Natural killer cell (primary cell): ENCODE measurements at regions of chr12 and their contacts with region 1.

Region 1: GRCh38 chr12:6873094-6874014 is at the start of gene SPSB2:
- DNase-seq: peak; percentile 99 to 100
- ATAC-seq: peak; percentile 87 to 99 (median 91)
- H3K4me3 ChIP-seq: peak within 1 kb of the TSS; percentile 81
- H3K4me3 Mint-ChIP-seq: peak within 1 kb of the TSS; percentile 93
- H3K27ac ChIP-seq: peak within 1 kb of the TSS; percentile 63
- H3K27ac Mint-ChIP-seq: peak within 1 kb of the TSS; percentile 87 to 94
- H3K4me1 ChIP-seq: peaks cover 50% of the 10 kb centered on the region
- H3K4me1 Mint-ChIP-seq: peaks cover 41 to 56% of the 10 kb centered on the region in 2 donors
- H3K27me3 ChIP-seq: no peaks in the 10 kb centered on the region
- H3K27me3 Mint-ChIP-seq: no peaks in the 10 kb centered on the region
- CTCF ChIP-seq: no peak
- total RNA-seq, gene SPSB2: 8.1 to 19.1 (median 8.4) TPM

Region 2: GRCh38 chr12:6752921-6753771 is 120.2 kb before region 1 on chr12 and contains the start of gene MLF2:
- intact Hi-C with region 1: loop called (anchors 2 kb)
- DNase-seq: peak; percentile 97 to 98
- ATAC-seq: peak; percentile 87 to 94 (median 88)
- H3K4me3 ChIP-seq: peak within 1 kb of the TSS; percentile 78
- H3K4me3 Mint-ChIP-seq: peak within 1 kb of the TSS; percentile 95
- H3K27ac ChIP-seq: peak within 1 kb of the TSS; percentile 93
- H3K27ac Mint-ChIP-seq: peak within 1 kb of the TSS; percentile 95 to 97
- H3K4me1 ChIP-seq: peaks cover 16% of the 10 kb centered on the region
- H3K4me1 Mint-ChIP-seq: peaks cover 5 to 34% of the 10 kb centered on the region in 2 donors
- H3K27me3 ChIP-seq: no peaks in the 10 kb centered on the region
- H3K27me3 Mint-ChIP-seq: peaks cover 0 to 13% of the 10 kb centered on the region in 2 donors
- CTCF ChIP-seq: no peak
- total RNA-seq, gene MLF2: 114 to 117 (median 116) TPM

Region 3: GRCh38 chr12:6890789-6891645 is 17.7 kb after region 1 on chr12:
- intact Hi-C with region 1: loop called (anchors 1 kb)
- DNase-seq: peak; percentile 99
- ATAC-seq: peak; percentile 93 to 99 (median 94)
- H3K4me3 ChIP-seq: peak overlapping the region; percentile 70
- H3K4me3 Mint-ChIP-seq: peak overlapping the region; percentile 87
- H3K27ac ChIP-seq: peak overlapping the region; percentile 98
- H3K27ac Mint-ChIP-seq: peak overlapping the region; percentile 95 to 96
- H3K4me1 ChIP-seq: peaks cover 14% of the 10 kb centered on the region
- H3K4me1 Mint-ChIP-seq: peaks cover 11 to 15% of the 10 kb centered on the region in 2 donors
- H3K27me3 ChIP-seq: no peaks in the 10 kb centered on the region
- H3K27me3 Mint-ChIP-seq: no peaks in the 10 kb centered on the region
- CTCF ChIP-seq: peak; percentile 75

Region 4: DNA sequence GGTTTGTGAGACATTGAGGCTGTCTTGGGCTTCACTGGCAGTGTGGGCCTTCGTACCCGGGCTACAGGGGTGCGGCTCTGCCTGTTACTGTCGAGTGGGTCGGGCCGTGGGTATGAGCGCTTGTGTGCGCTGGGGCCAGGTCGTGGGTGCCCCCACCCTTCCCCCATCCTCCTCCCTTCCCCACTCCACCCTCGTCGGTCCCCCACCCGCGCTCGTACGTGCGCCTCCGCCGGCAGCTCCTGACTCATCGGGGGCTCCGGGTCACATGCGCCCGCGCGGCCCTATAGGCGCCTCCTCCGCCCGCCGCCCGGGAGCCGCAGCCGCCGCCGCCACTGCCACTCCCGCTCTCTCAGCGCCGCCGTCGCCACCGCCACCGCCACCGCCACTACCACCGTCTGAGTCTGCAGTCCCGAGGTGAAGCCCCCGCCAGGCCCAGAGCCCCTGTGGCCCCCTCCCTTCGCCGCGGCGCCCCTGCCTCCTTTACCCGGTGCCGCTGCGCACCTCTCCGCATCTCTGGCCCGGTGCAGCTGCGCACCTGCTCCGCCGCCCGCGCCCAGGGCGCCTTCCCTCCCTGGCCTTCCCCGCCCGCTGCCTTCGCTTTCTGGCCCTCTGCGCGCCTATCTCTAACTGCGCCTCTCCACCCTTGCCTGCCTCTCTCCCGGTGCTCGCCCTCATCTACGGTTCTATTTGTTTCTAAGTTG is 41.0 kb after region 1 on chr12 and contains the start of gene ENO2:
- intact Hi-C with region 1: loop called (anchors 2 kb)
- DNase-seq: peak; percentile 80 to 91
- ATAC-seq: peak; percentile 92 to 94 (median 93)
- H3K4me3 ChIP-seq: peak within 1 kb of the TSS; percentile 54
- H3K4me3 Mint-ChIP-seq: peak within 1 kb of the TSS; percentile 94
- H3K27ac ChIP-seq: peak within 1 kb of the TSS; percentile 82
- H3K27ac Mint-ChIP-seq: peak within 1 kb of the TSS; percentile 74 to 95
- H3K4me1 ChIP-seq: peaks cover 16% of the 10 kb centered on the region
- H3K4me1 Mint-ChIP-seq: peaks cover 16 to 41% of the 10 kb centered on the region in 2 donors
- H3K27me3 ChIP-seq: no peaks in the 10 kb centered on the region
- H3K27me3 Mint-ChIP-seq: peaks cover 0 to 6% of the 10 kb centered on the region in 2 donors
- CTCF ChIP-seq: no peak
- total RNA-seq, gene ENO2: 21.6 to 30.8 (median 23.1) TPM

Region 5: DNA sequence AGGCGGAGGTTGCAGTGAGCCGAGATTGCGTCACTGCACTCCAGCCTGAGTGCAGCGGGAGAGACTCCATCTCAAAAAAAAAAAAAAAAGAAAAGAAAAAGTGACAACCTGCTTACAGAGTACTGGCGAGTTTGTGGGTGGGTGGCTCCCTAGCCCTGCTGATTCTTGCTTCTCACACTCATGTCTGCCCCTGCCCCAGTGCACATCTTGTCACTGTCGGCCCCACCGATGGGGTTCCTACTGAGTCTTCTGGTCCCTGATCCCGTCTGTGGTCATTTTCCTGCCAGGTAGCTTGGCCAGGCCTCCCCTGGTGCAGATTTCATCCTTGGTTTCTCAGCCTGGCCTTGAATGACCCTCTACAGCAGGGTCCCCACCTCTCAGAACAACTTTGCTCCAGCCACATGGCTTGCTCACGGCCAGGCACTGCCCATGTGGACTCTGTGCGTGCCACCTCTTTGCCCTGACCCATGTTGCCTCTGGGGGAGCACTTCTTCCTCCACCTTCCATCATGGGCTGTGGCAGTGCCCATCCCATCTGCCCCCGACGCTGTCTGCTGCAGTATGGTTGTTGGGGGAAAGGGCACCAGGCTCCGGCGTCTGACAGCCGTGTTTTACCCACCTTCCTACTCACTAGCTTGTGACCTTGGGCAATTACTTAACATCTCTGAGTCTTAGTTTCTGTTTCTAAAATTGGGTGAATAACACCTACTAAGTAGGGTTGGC is 75.7 kb after region 1 on chr12:
- intact Hi-C with region 1: no loop called
- DNase-seq: peak in 1 of 2 donors; percentile 71
- ATAC-seq: peak; percentile 32 to 47 (median 38)
- H3K4me3 ChIP-seq: no peak overlapping the region
- H3K4me3 Mint-ChIP-seq: peak overlapping the region; percentile 80
- H3K27ac ChIP-seq: peak overlapping the region; percentile 88
- H3K27ac Mint-ChIP-seq: peak overlapping the region; percentile 98 to 99
- H3K4me1 ChIP-seq: peaks cover 89% of the 10 kb centered on the region
- H3K4me1 Mint-ChIP-seq: peaks cover 82 to 97% of the 10 kb centered on the region in 2 donors
- H3K27me3 ChIP-seq: no peaks in the 10 kb centered on the region
- H3K27me3 Mint-ChIP-seq: no peaks in the 10 kb centered on the region
- CTCF ChIP-seq: no peak

Region 6: GRCh38 chr12:6965026-6965661 is 91.8 kb after region 1 on chr12:
- intact Hi-C with region 1: loop called (anchors 1 kb)
- DNase-seq: peak; percentile 84 to 95
- ATAC-seq: peak; percentile 53 to 70 (median 54)
- H3K4me3 ChIP-seq: no peak overlapping the region
- H3K4me3 Mint-ChIP-seq: peak overlapping the region; percentile 21
- H3K27ac ChIP-seq: peak overlapping the region; percentile 38
- H3K27ac Mint-ChIP-seq: peak overlapping the region; percentile 80 to 82
- H3K4me1 ChIP-seq: peaks cover 52% of the 10 kb centered on the region
- H3K4me1 Mint-ChIP-seq: peaks cover 32 to 41% of the 10 kb centered on the region in 2 donors
- H3K27me3 ChIP-seq: no peaks in the 10 kb centered on the region
- H3K27me3 Mint-ChIP-seq: no peaks in the 10 kb centered on the region
- CTCF ChIP-seq: peak; percentile 88

Region 7: GRCh38 chr12:7092229-7092985 is 219.1 kb after region 1 on chr12 and contains the start of gene C1R:
- intact Hi-C with region 1: loop called (anchors 1 kb)
- DNase-seq: peak; percentile 64 to 85
- ATAC-seq: peak in 2 of 3 donors; percentile 82 to 86
- H3K4me3 ChIP-seq: peak within 1 kb of the TSS; percentile 25
- H3K4me3 Mint-ChIP-seq: peak within 1 kb of the TSS; percentile 77
- H3K27ac ChIP-seq: no peak within 1 kb of the TSS
- H3K27ac Mint-ChIP-seq: peak within 1 kb of the TSS; percentile 43 to 79
- H3K4me1 ChIP-seq: peaks cover 12% of the 10 kb centered on the region
- H3K4me1 Mint-ChIP-seq: peaks cover 0 to 22% of the 10 kb centered on the region in 2 donors
- H3K27me3 ChIP-seq: no peaks in the 10 kb centered on the region
- H3K27me3 Mint-ChIP-seq: no peaks in the 10 kb centered on the region
- CTCF ChIP-seq: peak; percentile 79
- total RNA-seq, gene C1R: 6.4 to 7.8 (median 6.6) TPM

Region 8: DNA sequence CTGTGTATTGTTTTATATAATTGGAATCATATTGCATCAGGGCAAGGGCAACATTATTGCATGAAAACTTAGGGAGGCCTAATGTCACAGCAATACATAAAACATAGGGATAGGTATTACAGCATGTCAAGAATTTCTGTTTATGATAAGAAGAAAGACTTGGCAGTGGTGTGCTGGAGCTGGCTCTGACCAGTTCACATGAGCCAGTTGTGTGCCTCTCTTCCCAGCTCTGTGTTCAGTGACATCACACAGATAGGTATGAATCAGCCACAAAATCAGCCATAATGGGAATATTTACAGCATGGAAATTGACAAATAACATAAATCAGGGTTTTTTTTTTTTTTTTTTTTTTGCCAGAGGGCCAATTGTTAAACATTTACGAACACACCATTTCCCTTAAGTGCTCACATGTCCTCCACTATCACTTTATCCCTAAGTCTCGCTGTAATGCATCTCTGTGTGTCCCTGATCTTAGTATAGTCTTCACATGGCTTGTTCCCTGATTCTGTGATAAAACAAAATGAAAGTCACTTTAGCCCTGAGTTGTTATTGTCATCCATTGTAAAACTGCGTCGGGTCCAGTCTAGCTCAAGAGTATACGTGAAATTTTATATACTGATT is 398.6 kb after region 1 on chr12:
- intact Hi-C with region 1: no loop called
- DNase-seq: no peak
- ATAC-seq: no peak
- H3K4me3 ChIP-seq: no peak overlapping the region
- H3K4me3 Mint-ChIP-seq: no peak overlapping the region
- H3K27ac ChIP-seq: no peak overlapping the region
- H3K27ac Mint-ChIP-seq: no peak overlapping the region
- H3K4me1 ChIP-seq: no peaks in the 10 kb centered on the region
- H3K4me1 Mint-ChIP-seq: no peaks in the 10 kb centered on the region
- H3K27me3 ChIP-seq: no peaks in the 10 kb centered on the region
- H3K27me3 Mint-ChIP-seq: peaks cover 11 to 19% of the 10 kb centered on the region in 2 donors
- CTCF ChIP-seq: no peak